GM12878 (cell line): ENCODE measurements at regions of chr9 and their contacts with region 1.

Region 1: DNA sequence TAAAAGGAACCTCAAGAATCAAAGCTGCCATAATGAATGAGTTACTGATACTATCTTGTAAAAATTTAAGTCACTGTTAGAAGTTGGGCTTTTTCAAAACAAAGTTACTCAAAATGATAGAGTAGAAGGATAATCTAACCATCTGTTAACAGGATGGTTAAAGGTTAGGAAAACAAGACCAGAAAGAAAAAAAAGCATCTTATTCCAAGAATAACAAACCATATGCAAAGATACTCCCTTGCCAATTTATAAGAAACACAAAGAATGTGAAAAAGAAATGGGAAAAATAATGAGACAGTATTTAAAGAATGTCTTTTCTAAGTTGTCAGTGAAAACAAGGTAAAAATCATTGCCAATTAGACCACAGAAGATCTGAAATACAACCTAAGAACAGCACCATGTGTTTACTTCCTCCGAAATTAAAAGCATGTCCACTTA is 51.2 kb downstream of the STRBP start:
- DNase-seq: no peak
- ATAC-seq: no peak
- H3K4me3 ChIP-seq: no peak overlapping the region
- H3K27ac ChIP-seq: no peak overlapping the region; the same call in 1 of the 2 replicates
- H3K4me1 ChIP-seq: peaks cover 10% of the 10 kb centered on the region; the same call in 1 of the 2 replicates
- H3K27me3 ChIP-seq: no peaks in the 10 kb centered on the region
- CTCF ChIP-seq: no peak
- EP300 ChIP-seq: no peak
- POLR2A ChIP-seq: no peak
- RAD21 ChIP-seq: no peak

Region 2: GRCh38 chr9:123044586-123044985 is 172.6 kb before region 1 on chr9:
- CTCF ChIA-PET with region 1: no interaction called
- POLR2A ChIA-PET with region 1: no interaction called
- RAD21 ChIA-PET with region 1: no interaction called
- SMC1A ChIA-PET with region 1: no interaction called
- in situ Hi-C with region 1: no loop called
- intact Hi-C with region 1: no loop called
- DNase-seq: no peak
- ATAC-seq: no peak
- H3K4me3 ChIP-seq: no peak overlapping the region
- H3K27ac ChIP-seq: no peak overlapping the region
- H3K4me1 ChIP-seq: no peaks in the 10 kb centered on the region
- H3K27me3 ChIP-seq: no peaks in the 10 kb centered on the region
- CTCF ChIP-seq: no peak
- EP300 ChIP-seq: no peak
- POLR2A ChIP-seq: no peak
- RAD21 ChIP-seq: no peak

Region 3: DNA sequence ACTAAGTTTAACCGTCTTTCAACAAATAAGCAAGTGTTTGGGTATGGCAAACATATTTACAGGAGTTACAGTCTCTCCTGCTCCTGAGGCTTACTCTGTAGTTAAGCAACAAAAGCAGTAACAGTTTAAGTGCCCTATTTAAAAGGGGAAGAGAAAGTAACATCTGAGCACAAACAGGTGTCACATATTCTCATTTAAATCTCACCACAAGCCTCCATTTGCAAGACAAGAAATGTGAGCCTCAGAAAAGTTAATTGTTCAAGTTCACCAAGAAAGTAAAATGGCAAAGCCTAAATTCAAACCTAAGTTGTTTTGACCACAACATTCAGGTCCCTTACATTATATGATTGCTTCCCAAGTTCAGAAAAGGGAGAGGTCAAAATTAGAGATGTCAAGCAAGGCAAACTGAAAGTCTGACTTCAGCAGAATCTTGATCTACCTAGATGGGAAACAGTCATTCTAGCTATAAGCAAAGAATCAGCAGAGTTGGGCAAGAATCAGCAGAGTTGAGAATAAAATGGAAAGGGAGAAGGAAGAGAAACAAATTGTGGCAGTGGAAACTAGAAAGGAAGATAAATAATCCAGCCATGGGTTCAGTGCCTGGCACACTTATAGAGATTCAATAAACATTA is 42.2 kb before region 1 on chr9:
- CTCF ChIA-PET with region 1: no interaction called
- POLR2A ChIA-PET with region 1: no interaction called
- RAD21 ChIA-PET with region 1: no interaction called
- SMC1A ChIA-PET with region 1: interaction called, 4 read pairs
- in situ Hi-C with region 1: no loop called
- intact Hi-C with region 1: loop called (anchors 5 kb)
- DNase-seq: peak; percentile 75
- ATAC-seq: peak; percentile 97
- H3K4me3 ChIP-seq: no peak overlapping the region; the same call in 1 of the 2 replicates
- H3K27ac ChIP-seq: peak overlapping the region; percentile 95
- H3K4me1 ChIP-seq: peaks cover 45% of the 10 kb centered on the region
- H3K27me3 ChIP-seq: no peaks in the 10 kb centered on the region
- CTCF ChIP-seq: no peak
- EP300 ChIP-seq: peak; percentile 91 to 93
- POLR2A ChIP-seq: no peak
- RAD21 ChIP-seq: no peak

Region 4: GRCh38 chr9:123246534-123246933 is 29.4 kb after region 1 on chr9:
- CTCF ChIA-PET with region 1: no interaction called
- POLR2A ChIA-PET with region 1: no interaction called
- RAD21 ChIA-PET with region 1: no interaction called
- SMC1A ChIA-PET with region 1: no interaction called
- in situ Hi-C with region 1: no loop called
- intact Hi-C with region 1: no loop called
- DNase-seq: no peak
- ATAC-seq: no peak
- H3K4me3 ChIP-seq: no peak overlapping the region
- H3K27ac ChIP-seq: no peak overlapping the region
- H3K4me1 ChIP-seq: peaks cover 3% of the 10 kb centered on the region; the same call in 1 of the 2 replicates
- H3K27me3 ChIP-seq: no peaks in the 10 kb centered on the region
- CTCF ChIP-seq: no peak
- EP300 ChIP-seq: no peak
- POLR2A ChIP-seq: no peak
- RAD21 ChIP-seq: no peak

Region 5: DNA sequence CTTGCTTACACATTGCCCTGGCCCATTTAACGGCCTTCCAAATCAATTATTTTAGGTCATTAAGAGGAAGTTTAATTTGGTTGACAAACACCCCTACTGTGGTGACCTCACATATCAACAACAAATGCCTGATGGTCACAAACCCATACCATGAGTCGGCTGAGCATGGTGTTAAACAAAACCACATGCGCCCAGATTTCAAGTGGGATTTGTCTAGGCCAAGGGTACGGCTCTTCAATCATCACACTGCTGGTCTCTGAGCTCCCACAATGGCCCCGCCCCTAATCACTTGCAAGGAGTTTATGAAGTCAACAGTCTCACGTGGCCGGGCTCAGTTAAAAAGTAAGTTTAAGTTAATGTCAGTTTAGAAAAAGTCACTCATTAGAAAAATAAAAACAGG is 382.6 kb after region 1 on chr9:
- CTCF ChIA-PET with region 1: no interaction called
- POLR2A ChIA-PET with region 1: no interaction called
- RAD21 ChIA-PET with region 1: no interaction called
- SMC1A ChIA-PET with region 1: no interaction called
- in situ Hi-C with region 1: no loop called
- intact Hi-C with region 1: no loop called
- DNase-seq: no peak
- ATAC-seq: no peak
- H3K4me3 ChIP-seq: no peak overlapping the region
- H3K27ac ChIP-seq: no peak overlapping the region
- H3K4me1 ChIP-seq: peaks cover 4% of the 10 kb centered on the region; the same call in 1 of the 2 replicates
- H3K27me3 ChIP-seq: no peaks in the 10 kb centered on the region
- CTCF ChIP-seq: no peak
- EP300 ChIP-seq: no peak
- POLR2A ChIP-seq: no peak
- RAD21 ChIP-seq: no peak